Activated CD4-positive, alpha-beta T cell treated with anti-CD3 and anti-CD28 coated beads for 36 hours (primary cell): ENCODE measurements at regions of chr7 and their contacts with region 1.

Region 1: DNA sequence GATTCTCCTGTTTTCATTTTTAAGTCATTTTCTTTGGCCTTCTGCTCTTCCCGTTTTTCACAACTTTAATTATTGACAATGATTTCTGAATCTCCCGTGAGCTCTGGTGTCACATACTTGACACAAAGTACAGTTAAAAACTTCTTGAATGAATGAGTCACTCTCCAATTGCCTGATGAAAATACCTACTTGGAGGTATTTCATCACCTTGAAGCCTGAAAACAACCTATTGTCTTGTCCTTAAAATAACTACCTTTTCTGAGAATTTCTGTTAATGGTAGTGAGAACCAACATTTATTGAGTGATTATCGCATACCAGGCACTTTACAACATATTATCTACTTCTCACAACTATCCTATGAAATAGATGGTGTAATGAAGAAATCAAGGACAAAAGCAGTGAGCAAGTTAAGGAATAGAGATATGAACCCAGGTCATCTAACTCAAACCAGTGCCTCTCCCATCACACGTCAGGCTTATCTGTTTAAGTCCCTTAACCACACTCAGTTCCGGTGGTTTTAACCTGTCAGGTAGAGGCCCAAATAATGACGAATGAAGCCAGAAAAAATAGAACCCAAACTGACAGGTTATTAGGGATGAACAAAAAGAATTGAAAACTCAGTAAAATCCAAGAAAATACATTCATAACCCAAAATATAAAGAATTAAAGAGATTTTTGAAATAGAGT is 11.6 kb downstream of the BET1 start:
- DNase-seq: no peak
- ATAC-seq: no peak
- H3K4me3 Mint-ChIP-seq: no peak overlapping the region
- H3K27ac Mint-ChIP-seq: peak overlapping the region; percentile 70
- H3K4me1 Mint-ChIP-seq: peaks cover 7% of the 10 kb centered on the region
- H3K27me3 Mint-ChIP-seq: no peaks in the 10 kb centered on the region

Region 2: GRCh38 chr7:93914325-93915081 is 78.1 kb before region 1 on chr7:
- CTCF ChIA-PET with region 1: no interaction called
- POLR2A ChIA-PET with region 1: no interaction called
- intact Hi-C with region 1: no loop called
- DNase-seq: no peak
- ATAC-seq: no peak
- H3K4me3 Mint-ChIP-seq: no peak overlapping the region
- H3K27ac Mint-ChIP-seq: no peak overlapping the region
- H3K4me1 Mint-ChIP-seq: no peaks in the 10 kb centered on the region
- H3K27me3 Mint-ChIP-seq: peaks cover 6% of the 10 kb centered on the region

Region 3: DNA sequence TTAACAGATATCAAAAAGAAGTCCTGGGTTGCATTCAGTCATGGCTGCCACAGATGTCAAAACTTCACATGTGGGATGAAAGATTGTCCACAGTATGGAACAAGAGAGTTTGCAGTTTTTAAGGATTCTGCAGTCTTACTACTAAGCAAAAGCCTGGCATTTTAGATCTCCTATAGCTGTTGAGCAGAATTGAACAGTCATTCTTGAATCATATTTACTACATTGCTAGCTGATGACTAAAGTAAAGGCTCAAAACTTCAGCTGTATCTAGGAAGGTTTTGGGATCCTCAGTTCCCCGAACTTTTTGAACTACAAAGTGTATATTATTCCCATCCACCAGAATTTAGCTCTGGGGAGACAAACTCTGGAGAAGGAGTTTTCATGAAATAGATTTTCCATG is 19.4 kb before region 1 on chr7:
- CTCF ChIA-PET with region 1: no interaction called
- POLR2A ChIA-PET with region 1: no interaction called
- intact Hi-C with region 1: loop called in 1 of 2 experiments (anchors 2 kb)
- DNase-seq: no peak
- ATAC-seq: no peak
- H3K4me3 Mint-ChIP-seq: no peak overlapping the region
- H3K27ac Mint-ChIP-seq: no peak overlapping the region
- H3K4me1 Mint-ChIP-seq: no peaks in the 10 kb centered on the region
- H3K27me3 Mint-ChIP-seq: no peaks in the 10 kb centered on the region